ENCODE measurements at regions of chr1 and their contacts with region 1.

Region 1: DNA sequence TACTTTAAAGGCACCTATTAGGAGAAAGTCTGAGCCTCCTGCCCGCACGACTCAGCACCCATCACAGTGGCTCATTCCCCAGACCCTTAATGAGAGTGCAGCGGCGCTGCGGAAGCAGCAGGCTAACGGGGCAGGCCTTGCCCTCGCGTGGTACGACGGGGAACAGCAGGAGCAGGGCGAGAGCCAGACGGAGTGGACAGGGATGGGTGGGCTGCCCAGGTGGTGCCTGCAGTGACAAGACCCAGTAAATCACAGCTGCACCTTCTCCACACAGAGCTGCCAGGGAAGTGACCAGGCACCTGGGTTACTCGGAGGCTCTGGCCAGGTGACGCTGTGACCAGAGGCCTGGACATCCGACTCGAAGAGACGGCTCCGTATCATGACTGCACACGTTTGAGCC is 131.9 kb downstream of the NPHP4 start:
- DNase-seq: no peak
- ATAC-seq: no peak
- H3K4me3 ChIP-seq: no peak overlapping the region
- H3K27ac ChIP-seq: no peak overlapping the region
- H3K4me1 ChIP-seq: no peaks in the 10 kb centered on the region
- H3K27me3 ChIP-seq: no peaks in the 10 kb centered on the region
- CTCF ChIP-seq: no peak

Region 2: GRCh38 chr1:5905436-5905835 is 45.2 kb after region 1 on chr1:
- intact Hi-C with region 1: no loop called
- DNase-seq: no peak
- ATAC-seq: no peak
- H3K4me3 ChIP-seq: no peak overlapping the region
- H3K27ac ChIP-seq: no peak overlapping the region
- H3K4me1 ChIP-seq: no peaks in the 10 kb centered on the region
- H3K27me3 ChIP-seq: no peaks in the 10 kb centered on the region
- CTCF ChIP-seq: no peak

Region 3: GRCh38 chr1:7485086-7485780 is 1625.0 kb after region 1 on chr1:
- intact Hi-C with region 1: loop called in 1 of 2 experiments (anchors 10 kb)
- DNase-seq: no peak
- ATAC-seq: no peak
- H3K4me3 ChIP-seq: no peak overlapping the region
- H3K27ac ChIP-seq: no peak overlapping the region
- H3K4me1 ChIP-seq: no peaks in the 10 kb centered on the region
- H3K27me3 ChIP-seq: peaks cover 0 to 27% (median 10%) of the 10 kb centered on the region in 3 donors
- CTCF ChIP-seq: no peak